Activated T-helper 1 cell treated with anti-CD3 and anti-CD28 coated beads, Interleukin-12 subunit alpha, Interleukin-12 subunit beta, Interleukin-2, Interleukin-4 antibody, amounts not matched to agents 30 ng/mL and 10 ng/mL and 1 ng/mL, durations not matched to agents 14 hours and 24 hours and 36 hours (primary cell): ENCODE measurements at regions of chr2 and their contacts with region 1.

Region 1: DNA sequence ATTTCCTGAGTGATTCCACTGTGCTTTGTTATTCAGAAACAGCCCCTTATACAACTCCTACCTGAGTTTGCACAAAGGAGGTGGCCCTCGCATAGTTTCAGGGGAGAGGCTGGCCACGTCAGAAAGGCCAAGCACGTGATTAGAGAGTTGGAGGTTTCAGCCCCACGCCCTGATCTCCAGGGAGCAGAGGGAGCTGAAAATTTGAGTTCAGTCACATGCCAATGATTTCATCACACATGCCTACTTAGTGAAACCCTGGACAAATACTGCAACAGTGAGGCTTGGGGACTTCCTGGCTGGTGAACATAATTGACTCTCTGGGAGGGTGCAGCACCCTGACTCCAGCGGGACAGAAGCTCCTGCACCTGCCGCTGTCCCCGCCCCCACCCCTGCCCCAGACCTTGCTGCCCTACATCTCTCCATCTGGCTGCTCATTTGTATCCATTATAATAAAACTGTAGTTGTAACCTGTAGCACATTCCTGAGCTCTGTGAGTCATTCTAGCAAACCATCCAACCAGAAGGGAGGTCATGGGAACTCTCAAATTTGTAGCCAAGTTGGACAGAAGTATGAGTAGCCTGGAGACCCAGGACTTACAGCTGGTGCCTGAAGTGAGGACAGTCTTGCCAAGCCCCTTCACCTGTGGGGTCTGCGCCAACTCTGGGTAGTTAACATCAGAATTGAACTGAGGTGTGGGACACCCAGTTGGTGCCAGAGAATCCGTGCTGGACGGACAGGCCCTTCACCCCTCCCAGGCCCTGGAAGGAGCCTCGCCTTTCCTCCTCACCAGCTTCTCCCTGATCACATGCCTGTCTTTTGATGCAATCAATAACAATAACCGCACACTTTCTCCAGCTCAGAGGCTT is 224.3 kb downstream of the ANAPC1 start:
- DNase-seq: no peak
- H3K4me3 Mint-ChIP-seq: no peak overlapping the region
- H3K27ac Mint-ChIP-seq: no peak overlapping the region
- H3K4me1 Mint-ChIP-seq: peaks cover 52% of the 10 kb centered on the region
- H3K27me3 Mint-ChIP-seq: peaks cover 30% of the 10 kb centered on the region

Region 2: DNA sequence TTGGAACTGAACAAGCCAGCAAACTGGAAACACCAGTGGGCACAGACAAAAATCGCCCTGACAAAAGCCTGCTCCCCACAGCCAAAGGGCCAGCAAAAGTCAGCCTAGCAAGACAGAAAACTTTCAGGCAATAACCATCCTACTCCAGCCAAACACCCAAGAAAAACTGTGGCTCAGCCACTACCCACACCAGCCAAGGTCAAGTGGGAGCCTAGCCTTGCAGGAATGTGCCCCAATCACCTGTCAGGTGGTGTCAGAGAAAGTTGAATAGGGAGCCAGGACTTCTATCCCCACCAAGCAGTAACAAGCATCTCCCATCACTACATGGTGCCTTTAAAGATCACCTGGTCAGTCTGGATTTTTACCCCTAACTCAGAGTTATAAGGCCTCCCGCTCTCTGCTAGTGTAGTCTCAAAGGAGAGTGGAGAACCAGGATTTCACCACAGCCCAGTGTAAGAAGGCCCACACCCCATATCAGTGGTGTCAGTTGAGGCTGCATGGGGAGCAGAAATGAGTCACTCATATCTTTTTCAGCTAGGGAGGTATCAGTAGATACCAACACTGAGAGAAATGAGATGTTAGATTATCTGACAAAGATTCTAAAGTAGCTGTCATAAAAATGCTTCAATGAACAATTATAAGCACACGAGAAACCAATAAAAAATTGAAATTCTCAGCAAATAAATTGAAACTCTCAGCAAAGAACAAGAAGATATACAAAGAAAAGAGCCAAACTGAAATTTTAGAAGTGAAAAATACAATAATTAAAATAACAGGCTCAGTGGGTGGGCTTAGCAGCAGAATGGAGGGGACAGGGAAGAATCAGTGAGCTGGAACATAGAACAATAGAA is 33.7 kb before region 1 on chr2:
- intact Hi-C with region 1: loop called (anchors 2 kb)
- DNase-seq: no peak
- H3K4me3 Mint-ChIP-seq: peak overlapping the region; percentile 52
- H3K27ac Mint-ChIP-seq: peak overlapping the region; percentile 92
- H3K4me1 Mint-ChIP-seq: peaks cover 42% of the 10 kb centered on the region
- H3K27me3 Mint-ChIP-seq: peaks cover 2% of the 10 kb centered on the region

Region 3: GRCh38 chr2:111698743-111699554 is 39.3 kb after region 1 on chr2:
- intact Hi-C with region 1: loop called (anchors 5 kb)
- DNase-seq: peak; percentile 71
- H3K4me3 Mint-ChIP-seq: peak overlapping the region; percentile 77
- H3K27ac Mint-ChIP-seq: peak overlapping the region; percentile 93
- H3K4me1 Mint-ChIP-seq: peaks cover 63% of the 10 kb centered on the region
- H3K27me3 Mint-ChIP-seq: peaks cover 4% of the 10 kb centered on the region